ENCODE measurements at regions of chr20 and their contacts with region 1.

Region 1: GRCh38 chr20:38962044-38962927 is at the start of gene DHX35:
- DNase-seq: peak; percentile 94
- ATAC-seq: peak; percentile 100
- H3K4me3 ChIP-seq: peak within 1 kb of the TSS; percentile 90
- H3K27ac ChIP-seq: peak within 1 kb of the TSS; percentile 83
- H3K4me1 ChIP-seq: 0 out of 2 replicates have a peak, but pooled peaks cover 2% of the 10 kb centered on the region
- H3K27me3 ChIP-seq: no peaks in the 10 kb centered on the region
- CTCF ChIP-seq: peak; percentile 38
- POLR2A ChIP-seq: peak; percentile 31; the same call in 1 of the 2 replicates
- RAD21 ChIP-seq: peak; percentile 43
- total RNA-seq, gene DHX35: 8.1 and 9.1 TPM in 2 replicates

Region 2: DNA sequence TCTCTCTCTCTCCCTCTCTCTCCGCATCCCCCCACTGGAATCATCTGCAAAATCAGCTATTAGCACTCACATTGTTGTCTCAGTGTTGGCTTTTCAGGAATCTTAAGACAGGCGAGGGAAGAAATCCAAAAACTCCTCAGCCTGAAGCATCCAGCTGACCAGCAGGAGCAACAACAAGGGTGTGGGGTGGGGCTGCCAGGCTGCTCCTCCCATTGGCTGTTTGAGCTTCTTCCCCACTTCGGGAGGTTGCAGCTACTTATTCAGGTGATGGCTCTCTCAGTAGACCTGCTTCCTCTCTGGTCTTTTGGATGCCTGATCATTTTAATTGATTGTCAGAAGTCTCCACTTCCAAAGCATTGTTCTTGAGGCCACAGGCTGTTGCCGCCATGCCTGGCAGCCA is 262.1 kb before region 1 on chr20:
- CTCF ChIA-PET with region 1: no interaction called
- POLR2A ChIA-PET with region 1: no interaction called
- dilution Hi-C with region 1: no loop called
- in situ Hi-C with region 1: no loop called
- intact Hi-C with region 1: no loop called
- DNase-seq: no peak
- ATAC-seq: no peak
- H3K4me3 ChIP-seq: no peak overlapping the region
- H3K27ac ChIP-seq: no peak overlapping the region
- H3K4me1 ChIP-seq: no peaks in the 10 kb centered on the region
- H3K27me3 ChIP-seq: peaks cover 5% of the 10 kb centered on the region
- CTCF ChIP-seq: no peak
- POLR2A ChIP-seq: no peak
- RAD21 ChIP-seq: no peak

Region 3: DNA sequence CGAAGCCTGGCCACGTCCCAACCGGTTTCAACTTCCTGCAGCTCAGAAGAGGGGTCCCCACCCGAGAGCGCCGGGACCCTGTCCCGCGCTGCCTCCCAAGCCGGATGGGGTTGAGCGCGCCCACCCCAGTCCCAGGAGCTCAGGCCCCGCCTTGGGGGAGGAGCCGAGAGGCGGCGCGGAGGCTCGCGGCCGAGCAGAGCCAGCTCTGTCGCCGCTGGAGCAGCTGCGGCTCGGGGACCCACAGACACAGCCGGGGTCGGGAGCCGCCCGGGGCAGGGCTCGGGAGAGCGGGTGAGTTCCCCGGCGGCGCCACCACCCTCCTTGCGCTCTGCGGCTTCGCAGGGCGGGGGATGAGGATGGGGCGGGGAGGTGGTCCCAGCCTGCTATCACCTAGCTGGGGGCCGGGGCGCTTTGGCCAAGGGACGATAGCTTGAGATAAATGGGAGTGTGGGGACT is 156.8 kb before region 1 on chr20 and contains the start of gene PPP1R16B:
- CTCF ChIA-PET with region 1: no interaction called
- POLR2A ChIA-PET with region 1: no interaction called
- dilution Hi-C with region 1: no loop called
- in situ Hi-C with region 1: no loop called
- intact Hi-C with region 1: no loop called
- DNase-seq: no peak
- ATAC-seq: peak; percentile 90
- H3K4me3 ChIP-seq: no peak within 1 kb of the TSS; the same call in 1 of the 2 replicates
- H3K27ac ChIP-seq: no peak within 1 kb of the TSS
- H3K4me1 ChIP-seq: no peaks in the 10 kb centered on the region
- H3K27me3 ChIP-seq: peaks cover 54% of the 10 kb centered on the region
- CTCF ChIP-seq: no peak
- POLR2A ChIP-seq: no peak
- RAD21 ChIP-seq: no peak
- total RNA-seq, gene PPP1R16B: not detected in 2 replicates

Region 4: DNA sequence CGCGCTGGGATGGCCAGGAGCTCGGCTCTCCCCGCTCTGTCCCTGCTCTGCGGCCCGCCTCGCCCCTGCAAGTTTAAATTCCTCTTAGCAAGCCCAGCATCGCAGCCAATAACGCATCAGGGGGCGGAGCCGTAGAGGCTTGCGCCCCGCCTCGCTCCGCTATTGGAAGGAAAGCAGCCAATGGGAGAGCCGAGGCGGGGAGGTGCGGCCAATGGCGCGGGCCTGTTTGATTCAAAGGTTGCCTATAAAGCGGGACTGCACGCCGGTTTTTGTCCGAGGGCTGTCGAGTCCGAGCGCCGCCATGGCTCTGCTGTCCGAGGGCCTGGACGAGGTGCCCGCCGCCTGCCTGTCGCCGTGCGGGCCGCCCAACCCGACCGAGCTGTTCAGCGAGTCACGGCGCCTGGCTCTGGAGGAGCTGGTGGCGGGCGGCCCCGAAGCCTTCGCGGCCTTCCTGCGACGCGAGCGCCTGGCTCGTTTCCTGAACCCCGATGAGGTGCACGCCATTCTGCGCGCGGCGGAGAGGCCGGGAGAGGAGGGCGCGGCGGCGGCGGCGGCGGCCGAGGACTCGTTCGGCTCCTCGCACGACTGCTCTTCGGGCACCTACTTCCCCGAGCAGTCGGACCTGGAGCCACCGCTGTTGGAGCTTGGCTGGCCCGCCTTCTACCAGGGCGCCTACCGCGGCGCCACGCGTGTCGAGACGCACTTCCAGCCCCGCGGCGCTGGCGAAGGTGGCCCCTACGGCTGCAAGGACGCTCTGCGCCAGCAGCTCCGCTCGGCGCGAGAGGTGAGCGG is 35.9 kb before region 1 on chr20 and contains the start of gene FAM83D:
- CTCF ChIA-PET with region 1: interaction called, 4 read pairs
- POLR2A ChIA-PET with region 1: interaction called, 5 read pairs
- dilution Hi-C with region 1: no loop called
- in situ Hi-C with region 1: no loop called
- intact Hi-C with region 1: loop called (anchors 1 kb)
- DNase-seq: peak; percentile 97
- ATAC-seq: peak; percentile 99
- H3K4me3 ChIP-seq: peak within 1 kb of the TSS; percentile 66
- H3K27ac ChIP-seq: peak within 1 kb of the TSS; percentile 12; the same call in 1 of the 2 replicates
- H3K4me1 ChIP-seq: peaks cover 5% of the 10 kb centered on the region
- H3K27me3 ChIP-seq: peaks cover 8% of the 10 kb centered on the region
- CTCF ChIP-seq: peak; percentile 83; the same call in 1 of the 2 replicates
- POLR2A ChIP-seq: peak; percentile 93
- RAD21 ChIP-seq: no peak; the same call in none of the 2 replicates
- total RNA-seq, gene FAM83D: 20.4 and 23.1 TPM in 2 replicates

Region 5: GRCh38 chr20:39004508-39004907 is 42.2 kb after region 1 on chr20:
- CTCF ChIA-PET with region 1: no interaction called
- POLR2A ChIA-PET with region 1: no interaction called
- dilution Hi-C with region 1: no loop called
- in situ Hi-C with region 1: no loop called
- intact Hi-C with region 1: no loop called
- DNase-seq: no peak
- ATAC-seq: no peak
- H3K4me3 ChIP-seq: no peak overlapping the region
- H3K27ac ChIP-seq: no peak overlapping the region
- H3K4me1 ChIP-seq: no peaks in the 10 kb centered on the region
- H3K27me3 ChIP-seq: no peaks in the 10 kb centered on the region
- CTCF ChIP-seq: no peak
- POLR2A ChIP-seq: no peak
- RAD21 ChIP-seq: no peak

Region 6: DNA sequence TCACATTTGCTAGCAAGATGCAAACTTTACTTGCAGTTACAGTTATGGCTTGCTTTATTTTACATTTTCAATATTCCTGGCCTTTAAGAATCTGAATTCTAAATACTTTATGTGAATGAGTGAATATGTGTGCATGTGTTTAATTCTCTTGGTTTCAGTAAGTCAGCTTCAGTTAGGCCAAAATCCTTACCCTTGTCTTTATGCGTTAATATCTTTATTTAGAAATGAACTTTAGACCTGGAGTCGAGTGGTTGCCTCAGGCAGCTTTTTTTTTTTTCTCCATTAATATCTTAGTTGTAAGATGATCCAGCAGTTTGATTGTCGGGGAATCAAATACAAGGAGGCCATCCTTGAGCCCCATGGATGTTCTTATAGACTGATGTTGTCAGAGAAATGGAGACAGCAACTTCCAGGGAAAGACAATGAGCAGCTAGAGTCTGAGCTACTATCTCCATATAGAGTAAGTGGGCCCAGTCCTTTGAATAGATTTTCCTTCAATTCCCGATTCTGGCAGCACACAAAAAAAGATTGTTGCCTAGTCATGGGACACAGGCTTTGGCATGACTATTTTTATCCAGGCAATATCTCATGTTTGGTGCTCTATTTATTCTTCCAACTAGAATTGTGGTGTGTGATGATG is 397.8 kb after region 1 on chr20:
- CTCF ChIA-PET with region 1: no interaction called
- POLR2A ChIA-PET with region 1: no interaction called
- dilution Hi-C with region 1: no loop called
- in situ Hi-C with region 1: no loop called
- intact Hi-C with region 1: no loop called
- DNase-seq: no peak
- ATAC-seq: no peak
- H3K4me3 ChIP-seq: no peak overlapping the region
- H3K27ac ChIP-seq: no peak overlapping the region
- H3K4me1 ChIP-seq: no peaks in the 10 kb centered on the region
- H3K27me3 ChIP-seq: no peaks in the 10 kb centered on the region
- CTCF ChIP-seq: no peak
- POLR2A ChIP-seq: no peak
- RAD21 ChIP-seq: no peak

Measured in IMR-90 (cell line).